Natural killer cell (primary cell): ENCODE measurements at regions of chr3 and their contacts with region 1.

Region 1: GRCh38 chr3:71087143-71088018 is 496.1 kb downstream of the FOXP1 start:
- DNase-seq: peak in 1 of 2 donors; percentile 76
- ATAC-seq: peak; percentile 79 to 82 (median 81)
- H3K4me3 ChIP-seq: no peak overlapping the region
- H3K4me3 Mint-ChIP-seq: peak overlapping the region; percentile 52
- H3K27ac ChIP-seq: peak overlapping the region; percentile 49
- H3K27ac Mint-ChIP-seq: peak overlapping the region; percentile 69 to 75
- H3K4me1 ChIP-seq: peaks cover 32% of the 10 kb centered on the region
- H3K4me1 Mint-ChIP-seq: peaks cover 63 to 68% of the 10 kb centered on the region in 2 donors
- H3K27me3 ChIP-seq: no peaks in the 10 kb centered on the region
- H3K27me3 Mint-ChIP-seq: no peaks in the 10 kb centered on the region
- CTCF ChIP-seq: no peak

Region 2: DNA sequence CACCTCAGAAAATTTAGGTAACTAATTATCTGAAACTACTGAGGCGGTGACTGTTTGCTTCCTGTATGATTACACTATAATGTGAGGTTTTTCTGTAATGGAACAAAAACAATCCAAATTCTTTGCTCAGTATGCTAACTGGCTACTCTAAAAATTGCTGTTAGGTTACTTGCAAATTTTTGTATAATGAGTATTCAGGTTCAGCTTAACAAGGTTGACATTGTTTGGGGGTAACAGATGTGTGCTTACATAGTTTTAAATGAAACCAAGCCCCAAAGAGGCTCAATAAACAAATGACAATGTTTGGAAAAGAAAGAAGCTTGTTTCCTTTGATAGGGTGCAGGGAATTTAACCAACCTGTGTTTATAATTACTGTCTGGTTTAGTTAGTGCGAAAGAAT is 360.4 kb before region 1 on chr3:
- intact Hi-C with region 1: no loop called
- DNase-seq: no peak
- ATAC-seq: no peak
- H3K4me3 ChIP-seq: no peak overlapping the region
- H3K4me3 Mint-ChIP-seq: no peak overlapping the region
- H3K27ac ChIP-seq: no peak overlapping the region
- H3K27ac Mint-ChIP-seq: no peak overlapping the region
- H3K4me1 ChIP-seq: no peaks in the 10 kb centered on the region
- H3K4me1 Mint-ChIP-seq: no peaks in the 10 kb centered on the region
- H3K27me3 ChIP-seq: no peaks in the 10 kb centered on the region
- H3K27me3 Mint-ChIP-seq: peaks cover 0 to 2% of the 10 kb centered on the region in 2 donors
- CTCF ChIP-seq: no peak

Region 3: DNA sequence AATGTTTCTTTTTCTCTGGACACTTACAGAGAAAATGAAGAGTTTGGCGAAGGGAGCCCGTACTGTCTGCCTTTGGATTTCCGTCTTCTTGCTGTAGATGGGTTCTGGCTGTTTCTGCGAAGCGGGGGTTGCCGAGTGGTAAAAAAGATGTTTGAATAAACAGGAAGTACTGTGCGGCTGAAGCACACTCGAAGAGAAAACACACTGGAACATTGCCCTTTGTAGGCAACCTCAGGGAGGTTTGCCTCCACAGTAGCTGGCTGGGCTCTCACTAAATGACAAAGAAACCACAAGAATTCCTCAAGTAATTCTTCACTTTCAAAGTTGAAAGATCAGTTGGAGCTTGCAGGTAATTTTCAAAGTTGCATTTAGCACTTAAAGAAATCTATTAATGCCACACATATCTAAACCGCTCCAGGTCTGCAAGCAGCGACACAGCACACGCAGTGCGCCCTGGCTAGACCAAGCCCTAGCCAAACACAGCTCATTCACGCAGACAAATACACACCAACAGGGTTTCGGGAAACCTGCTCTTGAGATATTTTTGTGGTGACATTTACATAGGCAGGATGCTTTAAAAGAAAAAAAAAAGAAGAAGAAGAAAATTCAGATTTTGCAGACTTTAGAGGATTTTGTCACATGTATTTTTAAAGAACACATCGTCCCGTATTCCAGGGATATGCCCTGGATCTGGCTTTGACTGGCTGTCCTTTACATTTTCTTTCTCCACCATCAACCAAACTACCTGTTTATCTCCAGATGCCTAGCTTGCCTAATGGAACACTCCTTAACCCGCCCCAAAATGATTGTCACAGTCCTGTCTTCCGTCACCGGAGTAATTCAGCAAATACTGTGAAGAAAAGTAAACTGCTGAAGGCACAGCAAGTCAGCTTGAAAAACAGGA is 43.3 kb after region 1 on chr3:
- intact Hi-C with region 1: loop called (anchors 5 kb)
- DNase-seq: peak; percentile 62 to 88
- ATAC-seq: peak; percentile 74 to 87 (median 84)
- H3K4me3 ChIP-seq: peak overlapping the region; percentile 63
- H3K4me3 Mint-ChIP-seq: peak overlapping the region; percentile 95
- H3K27ac ChIP-seq: peak overlapping the region; percentile 86
- H3K27ac Mint-ChIP-seq: peak overlapping the region; percentile 93 to 98
- H3K4me1 ChIP-seq: peaks cover 18% of the 10 kb centered on the region
- H3K4me1 Mint-ChIP-seq: peaks cover 62 to 69% of the 10 kb centered on the region in 2 donors
- H3K27me3 ChIP-seq: no peaks in the 10 kb centered on the region
- H3K27me3 Mint-ChIP-seq: no peaks in the 10 kb centered on the region
- CTCF ChIP-seq: no peak